CD8-positive, alpha-beta T cell (primary cell): ENCODE measurements at regions of chr18 and their contacts with region 1.

Region 1: DNA sequence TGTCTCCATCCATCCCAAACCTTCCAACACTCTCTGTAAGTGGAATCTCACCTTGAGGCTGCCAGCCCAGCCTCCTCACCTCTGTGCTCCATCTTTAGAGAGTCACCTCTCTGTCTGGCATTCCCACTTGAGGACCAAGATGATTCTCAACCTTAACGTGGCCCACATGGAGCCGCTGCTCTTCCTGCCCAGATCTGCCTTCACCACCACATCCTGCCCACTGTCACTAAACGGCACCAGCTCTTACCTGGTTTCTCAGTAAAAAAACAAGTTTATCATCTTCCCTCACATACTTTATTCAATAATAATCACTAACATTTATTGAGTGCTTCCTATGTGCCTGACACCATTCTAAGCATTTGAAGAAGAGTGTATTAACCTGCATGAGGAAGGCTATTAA is 80.4 kb downstream of the NEDD4L start:
- DNase-seq: peak in 1 of 9 experiments; percentile 18
- ATAC-seq: no peak
- H3K4me3 ChIP-seq: no peak overlapping the region
- H3K4me3 Mint-ChIP-seq: no peak overlapping the region
- H3K27ac ChIP-seq: no peak overlapping the region
- H3K27ac Mint-ChIP-seq: no peak overlapping the region
- H3K4me1 ChIP-seq: peaks cover 5% of the 10 kb centered on the region
- H3K4me1 Mint-ChIP-seq: peaks cover 8% of the 10 kb centered on the region
- H3K27me3 ChIP-seq: no peaks in the 10 kb centered on the region
- H3K27me3 Mint-ChIP-seq: peaks cover 4% of the 10 kb centered on the region
- CTCF ChIP-seq: no peak

Region 2: GRCh38 chr18:56748698-56749268 is 1375.7 kb before region 1 on chr18:
- CTCF ChIA-PET with region 1: interaction called, 4 read pairs
- POLR2A ChIA-PET with region 1: no interaction called
- intact Hi-C with region 1: loop called in 1 of 2 experiments (anchors 5 kb)
- DNase-seq: peak in 2 of 9 experiments; percentile 32 to 44
- ATAC-seq: no peak
- H3K4me3 ChIP-seq: no peak overlapping the region
- H3K4me3 Mint-ChIP-seq: no peak overlapping the region
- H3K27ac ChIP-seq: no peak overlapping the region
- H3K27ac Mint-ChIP-seq: no peak overlapping the region
- H3K4me1 ChIP-seq: peaks cover 7% of the 10 kb centered on the region
- H3K4me1 Mint-ChIP-seq: peaks cover 24% of the 10 kb centered on the region
- H3K27me3 ChIP-seq: no peaks in the 10 kb centered on the region
- H3K27me3 Mint-ChIP-seq: no peaks in the 10 kb centered on the region
- CTCF ChIP-seq: peak; percentile 67

Region 3: DNA sequence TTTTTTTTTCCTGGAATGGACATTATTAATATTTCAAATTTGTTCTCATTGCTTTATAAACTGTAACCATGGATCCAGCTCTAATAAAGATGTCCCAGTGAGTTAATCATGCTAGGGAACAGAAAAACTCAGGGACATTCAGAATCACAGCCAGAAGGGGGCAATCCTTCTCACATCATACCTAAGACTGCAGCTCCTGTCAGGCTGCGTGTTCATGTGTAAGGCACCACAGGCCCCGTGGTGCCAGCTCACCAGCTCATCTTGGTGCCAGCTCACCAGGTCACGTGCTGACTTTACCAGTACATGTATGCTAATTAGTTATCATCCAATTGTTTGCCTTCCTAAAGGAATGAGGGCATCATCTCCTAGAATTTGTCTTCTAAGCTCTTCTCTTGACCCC is 165.2 kb before region 1 on chr18:
- CTCF ChIA-PET with region 1: interaction called, 4 read pairs
- POLR2A ChIA-PET with region 1: no interaction called
- intact Hi-C with region 1: loop called (anchors 1 to 5 kb)
- DNase-seq: peak in 2 of 9 experiments; percentile 8 to 38
- ATAC-seq: peak; percentile 31
- H3K4me3 ChIP-seq: no peak overlapping the region
- H3K4me3 Mint-ChIP-seq: no peak overlapping the region
- H3K27ac ChIP-seq: no peak overlapping the region
- H3K27ac Mint-ChIP-seq: no peak overlapping the region
- H3K4me1 ChIP-seq: no peaks in the 10 kb centered on the region
- H3K4me1 Mint-ChIP-seq: no peaks in the 10 kb centered on the region
- H3K27me3 ChIP-seq: no peaks in the 10 kb centered on the region
- H3K27me3 Mint-ChIP-seq: peaks cover 14% of the 10 kb centered on the region
- CTCF ChIP-seq: no peak